CD8-positive, alpha-beta T cell (primary cell): ENCODE measurements at regions of chr19 and their contacts with region 1.

Region 1: GRCh38 chr19:15154002-15154612 is 46.7 kb downstream of the NOTCH3 start:
- DNase-seq: peak in 4 of 9 experiments; percentile 27 to 51 (median 36)
- ATAC-seq: peak; percentile 61
- H3K4me3 ChIP-seq: no peak overlapping the region
- H3K4me3 Mint-ChIP-seq: no peak overlapping the region
- H3K27ac ChIP-seq: no peak overlapping the region
- H3K27ac Mint-ChIP-seq: no peak overlapping the region
- H3K4me1 ChIP-seq: no peaks in the 10 kb centered on the region
- H3K4me1 Mint-ChIP-seq: peaks cover 4% of the 10 kb centered on the region
- H3K27me3 ChIP-seq: no peaks in the 10 kb centered on the region
- H3K27me3 Mint-ChIP-seq: peaks cover 15% of the 10 kb centered on the region
- CTCF ChIP-seq: peak; percentile 48

Region 2: DNA sequence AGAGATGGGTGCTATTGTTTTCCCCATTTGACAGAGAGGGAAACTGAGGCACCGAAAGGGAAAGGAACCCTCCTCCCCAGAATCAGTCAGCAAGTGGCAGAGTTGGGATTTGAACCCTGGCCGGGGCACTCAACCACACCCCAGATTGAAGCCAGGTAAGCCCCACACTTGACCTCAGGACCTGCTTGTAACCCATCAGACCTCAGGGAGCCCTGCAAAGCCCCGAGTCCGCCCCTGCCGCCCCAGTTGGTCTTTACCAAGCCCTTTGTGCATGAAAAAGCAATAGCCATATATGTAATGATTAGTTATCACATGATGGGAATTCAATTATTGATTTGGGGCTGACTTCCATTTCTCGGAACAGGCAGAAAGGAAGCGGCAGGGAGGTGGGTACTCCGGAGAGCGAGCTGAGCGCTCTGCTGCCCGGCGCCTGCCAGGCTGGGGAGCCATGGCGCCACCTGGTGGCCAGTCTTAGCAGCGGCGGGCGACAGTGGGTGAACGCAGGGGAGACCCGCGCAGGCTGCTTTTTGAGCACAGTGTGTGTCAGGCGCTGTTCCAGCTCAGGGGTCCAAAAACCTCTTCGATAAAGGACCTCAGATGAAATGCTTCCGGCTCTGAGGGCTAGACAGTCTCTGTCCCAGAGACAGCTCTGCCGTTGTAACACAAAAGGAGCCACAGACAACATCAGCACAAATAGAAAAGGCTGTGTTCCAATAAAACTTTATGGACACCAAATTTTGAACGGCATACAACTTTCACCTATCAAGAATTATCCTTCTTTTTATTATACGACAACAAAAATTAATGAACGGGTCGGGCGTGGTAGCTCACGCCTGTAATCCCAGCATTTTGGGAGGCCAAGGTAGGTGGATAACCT is 1564.9 kb before region 1 on chr19:
- CTCF ChIA-PET with region 1: no interaction called
- POLR2A ChIA-PET with region 1: no interaction called
- intact Hi-C with region 1: no loop called
- DNase-seq: peak; percentile 71 to 92 (median 79)
- ATAC-seq: peak; percentile 95
- H3K4me3 ChIP-seq: no peak overlapping the region
- H3K4me3 Mint-ChIP-seq: peak overlapping the region; percentile 26
- H3K27ac ChIP-seq: no peak overlapping the region
- H3K27ac Mint-ChIP-seq: no peak overlapping the region
- H3K4me1 ChIP-seq: peaks cover 9% of the 10 kb centered on the region
- H3K4me1 Mint-ChIP-seq: no peaks in the 10 kb centered on the region
- H3K27me3 ChIP-seq: peaks cover 0 to 2% of the 10 kb centered on the region in 2 experiments
- H3K27me3 Mint-ChIP-seq: peaks cover 23% of the 10 kb centered on the region
- CTCF ChIP-seq: peak; percentile 91

Region 3: GRCh38 chr19:15101479-15102082 is 52.5 kb before region 1 on chr19:
- CTCF ChIA-PET with region 1: interaction called, 60 read pairs
- POLR2A ChIA-PET with region 1: no interaction called
- intact Hi-C with region 1: loop called (anchors 2 kb)
- DNase-seq: peak in 7 of 9 experiments; percentile 20 to 71 (median 58)
- ATAC-seq: peak; percentile 59
- H3K4me3 ChIP-seq: no peak overlapping the region
- H3K4me3 Mint-ChIP-seq: no peak overlapping the region
- H3K27ac ChIP-seq: no peak overlapping the region
- H3K27ac Mint-ChIP-seq: no peak overlapping the region
- H3K4me1 ChIP-seq: no peaks in the 10 kb centered on the region
- H3K4me1 Mint-ChIP-seq: peaks cover 4% of the 10 kb centered on the region
- H3K27me3 ChIP-seq: no peaks in the 10 kb centered on the region
- H3K27me3 Mint-ChIP-seq: peaks cover 7% of the 10 kb centered on the region
- CTCF ChIP-seq: peak; percentile 56

Region 4: DNA sequence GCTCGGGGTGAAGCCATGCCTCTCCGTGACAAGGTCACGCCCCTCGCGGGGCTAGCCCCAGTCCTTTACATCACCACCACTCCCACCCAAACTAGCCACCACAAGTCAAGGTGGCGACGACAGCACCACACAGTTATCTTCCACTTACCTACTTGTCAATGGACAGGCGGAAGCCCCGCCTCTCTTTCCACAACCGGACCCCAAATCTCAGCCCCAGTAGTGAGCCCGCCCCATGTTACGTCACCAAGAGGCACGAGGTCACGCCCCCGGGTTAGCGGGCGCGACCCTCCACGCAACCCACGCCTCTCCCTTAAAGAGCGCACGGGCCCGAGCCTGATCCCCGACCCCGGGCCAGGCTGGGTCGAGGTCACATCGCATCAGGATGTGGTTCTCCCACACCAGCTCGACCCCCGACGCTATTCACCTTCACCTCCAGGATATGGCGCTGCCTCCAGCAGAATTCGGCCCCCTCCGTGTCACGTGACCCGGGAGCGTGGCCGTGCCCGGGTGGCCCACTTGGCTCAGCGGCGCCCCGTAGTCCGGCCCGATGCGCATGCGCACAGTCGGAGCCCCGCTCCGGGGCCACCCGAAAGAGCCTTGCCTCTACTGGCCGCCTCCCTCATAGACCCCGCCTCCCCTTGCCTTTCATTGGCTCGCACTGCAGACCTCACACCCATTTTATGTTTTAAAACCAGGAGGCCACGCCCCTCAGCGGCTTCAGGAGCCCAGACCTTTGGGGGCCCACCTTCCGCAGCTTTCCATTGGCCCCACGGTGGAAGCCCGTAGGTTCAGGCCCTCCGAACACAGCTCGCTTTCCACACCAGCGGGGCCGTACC is 28.7 kb before region 1 on chr19:
- CTCF ChIA-PET with region 1: interaction called, 8 read pairs
- POLR2A ChIA-PET with region 1: no interaction called
- intact Hi-C with region 1: loop called in 1 of 2 experiments (anchors 1 kb)
- DNase-seq: peak; percentile 94 to 99 (median 97)
- ATAC-seq: peak; percentile 85
- H3K4me3 ChIP-seq: peak overlapping the region; percentile 98 to 99
- H3K4me3 Mint-ChIP-seq: peak overlapping the region; percentile 99
- H3K27ac ChIP-seq: peak overlapping the region; percentile 91 to 98
- H3K27ac Mint-ChIP-seq: peak overlapping the region; percentile 98
- H3K4me1 ChIP-seq: peaks cover 34% of the 10 kb centered on the region
- H3K4me1 Mint-ChIP-seq: peaks cover 47% of the 10 kb centered on the region
- H3K27me3 ChIP-seq: no peaks in the 10 kb centered on the region
- H3K27me3 Mint-ChIP-seq: no peaks in the 10 kb centered on the region
- CTCF ChIP-seq: no peak